Activated CD4-positive, alpha-beta T cell treated with anti-CD3 and anti-CD28 coated beads for 36 hours (primary cell): ENCODE measurements at regions of chr20 and their contacts with region 1.

Region 1: GRCh38 chr20:60137629-60138245 is 179.5 kb downstream of the CDH26 start:
- DNase-seq: peak; percentile 63
- ATAC-seq: peak; percentile 86
- H3K4me3 Mint-ChIP-seq: peak overlapping the region; percentile 71
- H3K27ac Mint-ChIP-seq: no peak overlapping the region
- H3K4me1 Mint-ChIP-seq: peaks cover 11% of the 10 kb centered on the region
- H3K27me3 Mint-ChIP-seq: no peaks in the 10 kb centered on the region

Region 2: DNA sequence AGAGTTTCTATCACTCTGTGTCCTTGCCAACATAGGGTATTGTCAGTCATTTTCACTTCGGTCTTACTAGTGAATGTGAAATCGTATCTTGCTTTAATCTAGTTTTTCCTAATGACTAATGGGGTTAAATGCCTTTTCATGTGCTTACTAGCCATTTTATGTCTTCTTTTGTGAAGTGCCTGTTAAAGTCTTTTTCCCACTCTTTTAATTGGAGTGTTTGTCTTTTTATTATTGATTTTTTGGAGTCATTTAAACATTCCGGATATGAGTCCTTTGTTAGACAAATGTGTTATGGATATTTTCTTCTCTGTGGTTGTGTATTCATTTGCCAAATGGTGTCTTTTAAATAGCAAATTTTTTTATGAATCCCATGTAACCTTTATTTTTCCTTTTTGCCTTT is 15.1 kb after region 1 on chr20:
- CTCF ChIA-PET with region 1: no interaction called
- POLR2A ChIA-PET with region 1: no interaction called
- intact Hi-C with region 1: no loop called
- DNase-seq: no peak
- ATAC-seq: no peak
- H3K4me3 Mint-ChIP-seq: no peak overlapping the region
- H3K27ac Mint-ChIP-seq: no peak overlapping the region
- H3K4me1 Mint-ChIP-seq: no peaks in the 10 kb centered on the region
- H3K27me3 Mint-ChIP-seq: peaks cover 4% of the 10 kb centered on the region

Region 3: GRCh38 chr20:60262967-60263603 is 125.3 kb after region 1 on chr20:
- CTCF ChIA-PET with region 1: interaction called, 9 read pairs
- POLR2A ChIA-PET with region 1: no interaction called
- intact Hi-C with region 1: loop called in 1 of 2 experiments (anchors 5 kb)
- DNase-seq: peak; percentile 70
- ATAC-seq: peak; percentile 36
- H3K4me3 Mint-ChIP-seq: no peak overlapping the region
- H3K27ac Mint-ChIP-seq: no peak overlapping the region
- H3K4me1 Mint-ChIP-seq: peaks cover 16% of the 10 kb centered on the region
- H3K27me3 Mint-ChIP-seq: no peaks in the 10 kb centered on the region

Region 4: DNA sequence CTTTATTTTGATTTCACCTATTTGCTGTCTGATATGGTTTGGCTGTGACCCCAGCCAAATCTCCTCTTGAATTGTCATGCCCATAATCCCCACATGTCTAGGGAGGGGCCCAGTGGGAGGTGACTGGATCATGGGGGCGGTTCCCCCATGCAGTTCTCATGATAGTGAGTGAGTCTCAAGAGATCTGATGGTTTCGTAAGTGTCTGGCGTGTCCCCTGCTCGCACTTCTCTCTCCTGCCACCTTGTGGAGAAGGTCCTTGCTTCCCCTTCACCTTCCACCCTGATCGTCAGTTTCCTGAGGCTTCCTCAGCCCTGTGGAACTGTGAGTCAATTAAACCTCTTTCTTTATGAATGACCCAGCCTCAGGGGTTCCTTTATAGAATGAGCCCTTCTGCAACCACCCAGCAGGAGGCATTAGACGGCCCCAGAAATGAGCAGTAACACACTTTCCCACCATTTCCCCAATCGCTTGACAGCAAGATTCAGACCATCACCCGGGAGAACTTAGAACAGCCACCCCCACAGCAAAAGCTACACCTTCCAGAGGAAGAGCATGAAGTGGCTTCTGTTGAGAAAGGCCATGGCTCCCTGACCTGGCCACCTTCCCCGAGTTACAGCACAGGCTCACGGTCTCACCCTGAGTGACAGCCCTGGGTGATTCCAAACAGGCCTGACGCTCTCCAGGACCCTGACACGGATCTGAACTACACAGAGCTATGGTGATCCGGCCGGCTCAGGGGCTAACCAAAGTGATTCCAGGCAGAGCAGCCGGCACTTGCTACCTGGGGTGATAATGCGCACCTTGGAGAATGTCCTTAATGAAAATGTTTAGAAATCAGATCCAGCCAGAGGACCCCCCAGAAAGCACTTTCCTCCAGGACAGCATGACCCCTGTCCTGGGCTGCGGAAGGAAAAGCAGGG is 983.1 kb after region 1 on chr20:
- CTCF ChIA-PET with region 1: interaction called, 3 read pairs
- POLR2A ChIA-PET with region 1: no interaction called
- intact Hi-C with region 1: loop called in 1 of 2 experiments (anchors 10 kb)
- DNase-seq: peak; percentile 68
- ATAC-seq: peak; percentile 95
- H3K4me3 Mint-ChIP-seq: no peak overlapping the region
- H3K27ac Mint-ChIP-seq: no peak overlapping the region
- H3K4me1 Mint-ChIP-seq: peaks cover 5% of the 10 kb centered on the region
- H3K27me3 Mint-ChIP-seq: peaks cover 3% of the 10 kb centered on the region